Transverse colon (tissue), 4 donors: ENCODE measurements at regions of chr4 and their contacts with region 1.

Region 1: DNA sequence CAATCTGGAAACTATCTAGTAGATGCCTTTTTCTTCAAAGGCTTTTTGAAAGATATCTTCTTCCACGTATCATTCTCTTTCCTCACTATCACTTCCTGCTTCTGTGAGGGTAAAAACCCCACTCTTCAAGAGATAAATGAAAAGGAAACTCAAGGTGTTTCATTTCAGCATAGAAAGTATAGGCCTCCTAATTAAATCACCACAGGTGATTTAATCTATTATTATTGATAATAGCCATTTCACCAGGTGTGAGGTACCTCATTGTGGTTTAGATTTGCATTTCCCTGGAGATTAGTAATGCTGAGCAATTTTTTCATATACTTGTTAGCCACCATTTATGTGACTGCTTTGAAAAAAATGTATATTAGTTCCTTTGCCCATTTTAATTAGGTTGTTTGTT is 92.0 kb upstream of the EMCN start:
- DNase-seq: no peak
- H3K4me3 ChIP-seq: no peak overlapping the region
- H3K27ac ChIP-seq: no peak overlapping the region
- H3K4me1 ChIP-seq: no peaks in the 10 kb centered on the region
- H3K27me3 ChIP-seq: no peaks in the 10 kb centered on the region
- CTCF ChIP-seq: no peak
- EP300 ChIP-seq: no peak
- POLR2A ChIP-seq: no peak

Region 2: DNA sequence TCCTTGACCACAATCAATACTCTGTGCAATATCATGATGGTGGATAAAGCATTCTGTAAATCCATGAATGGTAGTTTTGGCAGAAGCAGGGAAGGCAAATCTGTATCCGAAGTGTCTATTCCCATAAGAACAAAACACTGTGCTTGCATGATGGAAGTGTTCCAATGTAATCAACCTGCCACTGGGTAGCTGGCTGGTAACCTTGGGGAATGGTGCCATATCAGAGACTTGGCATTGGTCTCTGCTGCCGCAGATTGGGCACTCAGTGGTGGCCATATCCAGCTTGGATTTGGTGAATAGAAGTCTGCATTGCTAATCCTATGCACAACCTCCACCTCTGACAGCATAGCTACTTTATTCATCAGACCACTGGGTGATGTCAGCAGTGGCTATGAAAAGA is 22.4 kb after region 1 on chr4:
- in situ Hi-C with region 1: no loop called
- intact Hi-C with region 1: loop called (anchors 1 kb)
- DNase-seq: no peak
- H3K4me3 ChIP-seq: no peak overlapping the region
- H3K27ac ChIP-seq: no peak overlapping the region
- H3K4me1 ChIP-seq: no peaks in the 10 kb centered on the region
- H3K27me3 ChIP-seq: no peaks in the 10 kb centered on the region
- CTCF ChIP-seq: no peak
- EP300 ChIP-seq: no peak
- POLR2A ChIP-seq: no peak